GM12878 (cell line): ENCODE measurements at regions of chr7 and their contacts with region 1.

Region 1: GRCh38 chr7:19982841-19983835 is 209.7 kb upstream of the TMEM196 start:
- DNase-seq: peak; percentile 38
- ATAC-seq: peak; percentile 86
- H3K4me3 ChIP-seq: no peak overlapping the region
- H3K27ac ChIP-seq: no peak overlapping the region
- H3K4me1 ChIP-seq: no peaks in the 10 kb centered on the region; the same call in 1 of the 2 replicates
- H3K27me3 ChIP-seq: no peaks in the 10 kb centered on the region
- CTCF ChIP-seq: peak; percentile 43 to 55 (median 46); a peak in 5 of 6 replicates
- EP300 ChIP-seq: no peak
- POLR2A ChIP-seq: no peak
- RAD21 ChIP-seq: peak; percentile 89

Region 2: DNA sequence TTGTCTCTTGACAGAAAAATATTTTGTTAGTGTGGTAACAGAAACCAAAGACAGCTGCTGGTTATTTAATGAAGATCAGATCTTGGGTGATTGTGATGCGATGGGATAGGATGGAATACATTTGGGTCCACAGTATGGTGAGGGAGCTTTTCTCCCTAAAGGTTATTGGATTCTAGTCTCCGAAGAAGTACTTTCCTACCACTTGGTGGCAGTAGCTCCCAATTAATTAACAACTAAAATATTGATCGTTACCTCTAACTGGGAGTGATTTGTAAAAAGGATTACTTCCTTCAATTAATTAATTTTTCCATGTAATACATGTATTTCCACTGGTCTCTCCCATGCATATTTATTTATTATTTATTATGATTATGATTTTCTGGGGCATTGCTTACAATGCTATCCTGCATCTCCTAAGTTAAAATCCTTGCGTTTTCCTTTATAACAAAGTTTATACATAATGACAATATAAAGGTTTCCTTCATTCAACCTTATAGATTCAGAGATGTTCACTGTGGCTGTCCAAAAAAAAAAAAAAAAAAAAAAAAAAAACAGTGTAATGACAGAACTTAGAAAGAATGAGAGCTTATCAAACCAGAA is 235.3 kb before region 1 on chr7:
- CTCF ChIA-PET with region 1: interaction called, 13 read pairs
- POLR2A ChIA-PET with region 1: no interaction called
- RAD21 ChIA-PET with region 1: interaction called, 6 read pairs
- SMC1A ChIA-PET with region 1: interaction called, 3 read pairs
- in situ Hi-C with region 1: no loop called
- intact Hi-C with region 1: no loop called
- DNase-seq: no peak
- ATAC-seq: peak; percentile 76
- H3K4me3 ChIP-seq: no peak overlapping the region
- H3K27ac ChIP-seq: no peak overlapping the region
- H3K4me1 ChIP-seq: no peaks in the 10 kb centered on the region
- H3K27me3 ChIP-seq: no peaks in the 10 kb centered on the region
- CTCF ChIP-seq: peak; percentile 47 to 61 (median 47); a peak in 5 of 6 replicates
- EP300 ChIP-seq: no peak
- POLR2A ChIP-seq: no peak
- RAD21 ChIP-seq: peak; percentile 63

Region 3: GRCh38 chr7:19939746-19940145 is 43.4 kb before region 1 on chr7:
- CTCF ChIA-PET with region 1: no interaction called
- POLR2A ChIA-PET with region 1: no interaction called
- RAD21 ChIA-PET with region 1: no interaction called
- SMC1A ChIA-PET with region 1: no interaction called
- in situ Hi-C with region 1: no loop called
- intact Hi-C with region 1: no loop called
- DNase-seq: no peak
- ATAC-seq: no peak
- H3K4me3 ChIP-seq: no peak overlapping the region
- H3K27ac ChIP-seq: no peak overlapping the region
- H3K4me1 ChIP-seq: no peaks in the 10 kb centered on the region
- H3K27me3 ChIP-seq: no peaks in the 10 kb centered on the region
- CTCF ChIP-seq: no peak
- EP300 ChIP-seq: no peak
- POLR2A ChIP-seq: no peak
- RAD21 ChIP-seq: no peak

Region 4: GRCh38 chr7:20010877-20011276 is 27.7 kb after region 1 on chr7:
- CTCF ChIA-PET with region 1: interaction called, 10 read pairs
- POLR2A ChIA-PET with region 1: no interaction called
- RAD21 ChIA-PET with region 1: interaction called, 3 read pairs
- SMC1A ChIA-PET with region 1: interaction called, 3 read pairs
- in situ Hi-C with region 1: no loop called
- intact Hi-C with region 1: no loop called
- DNase-seq: peak; percentile 35
- ATAC-seq: no peak
- H3K4me3 ChIP-seq: no peak overlapping the region
- H3K27ac ChIP-seq: no peak overlapping the region
- H3K4me1 ChIP-seq: peaks cover 3% of the 10 kb centered on the region; the same call in 1 of the 2 replicates
- H3K27me3 ChIP-seq: no peaks in the 10 kb centered on the region
- CTCF ChIP-seq: no peak
- EP300 ChIP-seq: no peak
- POLR2A ChIP-seq: no peak
- RAD21 ChIP-seq: no peak

Region 5: GRCh38 chr7:20146451-20146850 is 163.3 kb after region 1 on chr7:
- CTCF ChIA-PET with region 1: interaction called, 6 read pairs
- POLR2A ChIA-PET with region 1: interaction called, 4 read pairs
- RAD21 ChIA-PET with region 1: interaction called, 10 read pairs
- SMC1A ChIA-PET with region 1: no interaction called
- in situ Hi-C with region 1: no loop called
- intact Hi-C with region 1: no loop called
- DNase-seq: no peak
- ATAC-seq: no peak
- H3K4me3 ChIP-seq: no peak overlapping the region
- H3K27ac ChIP-seq: no peak overlapping the region
- H3K4me1 ChIP-seq: no peaks in the 10 kb centered on the region
- H3K27me3 ChIP-seq: no peaks in the 10 kb centered on the region
- CTCF ChIP-seq: no peak
- EP300 ChIP-seq: no peak
- POLR2A ChIP-seq: no peak
- RAD21 ChIP-seq: no peak

Region 6: GRCh38 chr7:20172736-20173334 is 189.7 kb after region 1 on chr7:
- CTCF ChIA-PET with region 1: interaction called, 31 read pairs
- POLR2A ChIA-PET with region 1: no interaction called
- RAD21 ChIA-PET with region 1: interaction called, 5 read pairs
- SMC1A ChIA-PET with region 1: interaction called, 27 read pairs
- in situ Hi-C with region 1: no loop called
- intact Hi-C with region 1: loop called (anchors 5 kb)
- DNase-seq: no peak
- ATAC-seq: peak; percentile 72
- H3K4me3 ChIP-seq: no peak overlapping the region
- H3K27ac ChIP-seq: no peak overlapping the region
- H3K4me1 ChIP-seq: no peaks in the 10 kb centered on the region
- H3K27me3 ChIP-seq: no peaks in the 10 kb centered on the region
- CTCF ChIP-seq: peak; percentile 47 to 51 (median 49); a peak in 5 of 6 replicates
- EP300 ChIP-seq: no peak
- POLR2A ChIP-seq: no peak
- RAD21 ChIP-seq: peak; percentile 70

Region 7: DNA sequence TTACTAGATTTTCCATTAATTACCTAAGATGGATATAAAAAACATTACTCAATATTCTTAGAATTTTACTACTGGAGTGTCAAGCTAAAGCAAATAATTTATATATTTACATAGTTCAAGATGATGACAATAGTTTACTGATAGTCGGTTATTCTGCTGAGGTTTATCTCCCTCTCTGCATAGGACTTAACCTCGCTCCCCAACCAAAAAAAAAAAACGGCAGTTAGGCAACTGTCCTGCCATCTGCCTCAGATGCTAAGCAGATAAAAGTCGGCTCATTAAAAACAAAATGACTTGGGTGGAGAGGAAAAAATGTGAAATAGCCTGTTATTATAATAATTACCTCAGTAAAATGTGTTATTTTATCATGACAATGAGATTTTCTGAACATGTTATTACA is 333.6 kb after region 1 on chr7:
- CTCF ChIA-PET with region 1: interaction called, 113 read pairs
- POLR2A ChIA-PET with region 1: interaction called, 3 read pairs
- RAD21 ChIA-PET with region 1: interaction called, 42 read pairs
- SMC1A ChIA-PET with region 1: interaction called, 74 read pairs
- in situ Hi-C with region 1: loop called (anchors 5 kb)
- intact Hi-C with region 1: loop called (anchors 1 kb)
- DNase-seq: no peak
- ATAC-seq: no peak
- H3K4me3 ChIP-seq: no peak overlapping the region
- H3K27ac ChIP-seq: no peak overlapping the region
- H3K4me1 ChIP-seq: no peaks in the 10 kb centered on the region
- H3K27me3 ChIP-seq: no peaks in the 10 kb centered on the region
- CTCF ChIP-seq: no peak
- EP300 ChIP-seq: no peak
- POLR2A ChIP-seq: no peak
- RAD21 ChIP-seq: no peak

Region 8: DNA sequence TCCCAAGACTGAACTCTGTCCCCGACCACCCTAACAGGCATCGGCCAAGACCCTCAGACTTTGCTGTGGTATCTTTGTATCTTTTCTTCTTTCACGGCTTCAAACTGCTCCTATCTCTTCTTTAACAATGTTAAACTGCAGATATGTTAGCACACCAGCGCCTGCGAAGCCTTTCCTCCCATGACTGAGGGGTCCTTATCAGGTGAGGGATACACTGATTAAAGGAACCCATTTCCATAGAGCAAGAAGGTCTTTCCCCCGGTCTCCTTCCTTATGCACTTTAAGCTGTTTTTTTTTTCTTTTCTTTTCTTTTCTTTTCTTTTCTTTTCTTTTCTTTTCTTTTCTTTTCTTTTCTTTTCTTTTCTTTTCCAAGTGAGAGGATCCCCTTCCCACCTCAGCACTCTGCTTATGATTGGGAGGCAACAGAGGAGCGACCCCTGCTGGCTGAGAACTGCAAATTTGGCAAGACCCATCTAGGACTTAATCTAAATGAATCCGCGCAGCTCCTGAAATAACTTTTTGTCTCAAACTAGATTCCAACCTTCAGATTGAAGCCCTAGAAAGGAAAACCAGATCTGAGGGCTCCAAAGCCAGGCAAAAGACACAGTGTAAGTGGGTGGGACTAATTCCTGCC is 457.5 kb after region 1 on chr7:
- CTCF ChIA-PET with region 1: interaction called, 20 read pairs
- POLR2A ChIA-PET with region 1: no interaction called
- RAD21 ChIA-PET with region 1: interaction called, 11 read pairs
- SMC1A ChIA-PET with region 1: interaction called, 9 read pairs
- in situ Hi-C with region 1: no loop called
- intact Hi-C with region 1: loop called (anchors 5 kb)
- DNase-seq: no peak
- ATAC-seq: peak; percentile 35; the same call in 1 of the 3 replicates
- H3K4me3 ChIP-seq: no peak overlapping the region
- H3K27ac ChIP-seq: no peak overlapping the region
- H3K4me1 ChIP-seq: peaks cover 15% of the 10 kb centered on the region; the same call in 1 of the 2 replicates
- H3K27me3 ChIP-seq: no peaks in the 10 kb centered on the region
- CTCF ChIP-seq: peak; percentile 34 to 65 (median 58)
- EP300 ChIP-seq: no peak
- POLR2A ChIP-seq: no peak
- RAD21 ChIP-seq: peak; percentile 60